ENCODE measurements at regions of chr12 and their contacts with region 1.

Region 1: DNA sequence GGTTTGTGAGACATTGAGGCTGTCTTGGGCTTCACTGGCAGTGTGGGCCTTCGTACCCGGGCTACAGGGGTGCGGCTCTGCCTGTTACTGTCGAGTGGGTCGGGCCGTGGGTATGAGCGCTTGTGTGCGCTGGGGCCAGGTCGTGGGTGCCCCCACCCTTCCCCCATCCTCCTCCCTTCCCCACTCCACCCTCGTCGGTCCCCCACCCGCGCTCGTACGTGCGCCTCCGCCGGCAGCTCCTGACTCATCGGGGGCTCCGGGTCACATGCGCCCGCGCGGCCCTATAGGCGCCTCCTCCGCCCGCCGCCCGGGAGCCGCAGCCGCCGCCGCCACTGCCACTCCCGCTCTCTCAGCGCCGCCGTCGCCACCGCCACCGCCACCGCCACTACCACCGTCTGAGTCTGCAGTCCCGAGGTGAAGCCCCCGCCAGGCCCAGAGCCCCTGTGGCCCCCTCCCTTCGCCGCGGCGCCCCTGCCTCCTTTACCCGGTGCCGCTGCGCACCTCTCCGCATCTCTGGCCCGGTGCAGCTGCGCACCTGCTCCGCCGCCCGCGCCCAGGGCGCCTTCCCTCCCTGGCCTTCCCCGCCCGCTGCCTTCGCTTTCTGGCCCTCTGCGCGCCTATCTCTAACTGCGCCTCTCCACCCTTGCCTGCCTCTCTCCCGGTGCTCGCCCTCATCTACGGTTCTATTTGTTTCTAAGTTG is at the start of gene ENO2:
- DNase-seq: peak; percentile 88
- H3K4me3 Mint-ChIP-seq: peak within 1 kb of the TSS; percentile 92
- H3K27ac Mint-ChIP-seq: peak within 1 kb of the TSS; percentile 88
- H3K4me1 Mint-ChIP-seq: peaks cover 30% of the 10 kb centered on the region
- H3K27me3 Mint-ChIP-seq: no peaks in the 10 kb centered on the region
- total RNA-seq, gene ENO2: 185 to 193 TPM

Region 2: DNA sequence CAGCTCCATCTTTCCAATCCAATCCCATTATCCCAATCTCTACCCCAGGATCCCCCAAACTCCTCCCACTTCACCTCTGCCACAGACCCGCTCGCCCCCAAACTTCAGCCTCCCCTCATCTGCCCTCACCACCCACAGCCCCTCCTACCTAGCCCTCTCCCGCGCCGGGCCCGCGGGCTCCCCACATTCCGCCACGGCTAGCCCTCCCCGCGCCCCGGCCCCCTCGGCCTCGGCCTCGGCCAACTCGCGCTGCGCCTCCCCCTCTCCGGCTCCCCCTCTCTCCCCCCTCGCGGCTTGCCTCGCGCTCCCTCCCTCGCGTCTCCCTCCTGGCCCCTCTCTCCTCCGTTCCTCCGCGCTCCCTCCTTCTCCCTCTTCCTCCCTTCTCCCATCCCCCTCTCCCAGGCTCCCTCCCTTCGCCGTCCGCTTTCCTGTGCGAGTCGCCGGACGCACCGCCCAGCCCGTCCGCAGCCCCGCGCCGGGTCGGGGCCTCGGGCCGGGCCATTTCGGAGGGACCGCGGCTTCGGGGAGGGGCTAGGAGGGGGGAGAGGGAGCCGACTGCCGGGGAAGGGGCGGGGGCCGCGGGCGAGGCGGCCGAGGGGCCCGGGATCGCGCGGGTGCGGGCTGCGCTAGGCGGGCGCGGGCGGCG is 13.1 kb after region 1 on chr12 and contains the start of gene ATN1:
- CTCF ChIA-PET with region 1: interaction called, 22 read pairs
- POLR2A ChIA-PET with region 1: interaction called, 10 read pairs
- intact Hi-C with region 1: no loop called
- DNase-seq: peak; percentile 61
- H3K4me3 Mint-ChIP-seq: peak within 1 kb of the TSS; percentile 84
- H3K27ac Mint-ChIP-seq: peak within 1 kb of the TSS; percentile 89
- H3K4me1 Mint-ChIP-seq: peaks cover 64% of the 10 kb centered on the region
- H3K27me3 Mint-ChIP-seq: no peaks in the 10 kb centered on the region
- total RNA-seq, gene ATN1: 34.8 to 37.8 TPM

Measured in activated CD4-positive, alpha-beta memory T cell treated with anti-CD3 and anti-CD28 coated beads for 36 hours (primary cell).